ENCODE measurements at regions of chr9 and their contacts with region 1.

Region 1: DNA sequence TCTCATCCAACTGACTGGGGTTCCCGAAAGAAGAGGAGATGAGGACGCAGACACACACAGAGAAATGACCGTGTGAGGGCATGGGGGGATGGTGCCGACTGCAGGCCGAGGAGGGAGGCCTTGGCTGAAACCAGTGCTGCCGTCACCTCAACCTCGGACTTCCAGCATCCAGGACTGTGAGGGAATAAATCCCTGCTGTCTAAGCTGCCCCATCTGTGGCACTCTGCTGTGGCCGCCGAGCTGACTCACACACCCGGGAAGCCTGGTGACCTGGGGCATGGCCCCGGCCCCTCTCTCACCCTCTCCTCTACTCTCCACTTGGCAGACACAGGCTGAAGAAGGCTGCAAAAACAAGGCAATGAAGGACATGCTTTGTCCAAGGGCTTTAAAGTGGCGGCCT is 4.4 kb upstream of the COL5A1 start:
- DNase-seq: peak; percentile 74 to 94 (median 90)
- H3K4me3 ChIP-seq: no peak overlapping the region
- H3K27ac ChIP-seq: peak overlapping the region; percentile 7 to 93 (median 75)
- H3K4me1 ChIP-seq: peaks cover 10 to 23% of the 10 kb centered on the region in 2 donors
- H3K27me3 ChIP-seq: no peaks in the 10 kb centered on the region
- CTCF ChIP-seq: peak in 2 of 6 experiments; percentile 7 to 11
- POLR2A ChIP-seq: peak in 1 of 2 donors; percentile 37

Region 2: DNA sequence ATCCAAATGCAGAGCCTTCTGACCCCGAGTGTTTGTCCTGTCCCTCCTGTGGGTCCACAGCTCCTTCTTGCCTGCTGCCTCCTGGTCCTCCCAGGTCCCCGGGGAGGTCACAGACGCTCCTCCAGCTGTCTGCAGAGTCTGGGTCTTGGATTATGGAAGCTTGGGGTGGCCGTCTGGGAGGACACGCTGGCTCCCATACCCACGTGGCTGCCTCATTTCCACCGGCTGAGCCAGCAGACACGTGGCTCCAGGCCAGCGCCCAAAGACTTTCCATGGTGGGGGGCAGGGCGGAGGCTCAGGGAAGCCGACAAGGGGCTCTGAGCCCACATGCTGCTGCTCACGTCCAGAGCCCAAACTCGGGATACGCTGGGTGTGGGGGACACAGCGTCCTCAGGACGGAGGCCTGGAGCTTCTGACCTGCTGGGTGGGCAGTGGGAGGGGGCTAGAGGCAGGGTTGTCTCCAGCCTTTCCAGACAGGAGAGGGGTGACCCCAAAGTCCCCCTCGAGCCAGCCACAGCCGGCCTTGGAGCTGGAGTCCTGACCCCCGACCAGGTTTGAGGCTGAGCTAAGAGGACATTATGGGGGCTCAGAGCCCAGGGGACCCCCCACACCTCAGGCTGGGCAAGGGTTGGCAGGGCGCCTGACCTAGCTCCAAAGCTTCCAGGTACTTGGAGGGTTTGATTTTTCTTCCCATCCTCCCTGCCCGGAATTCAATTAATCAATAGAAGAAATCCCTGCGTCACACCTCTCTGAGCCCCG is 448.7 kb before region 1 on chr9:
- intact Hi-C with region 1: no loop called
- DNase-seq: peak in 3 of 7 donors; percentile 14 to 32 (median 29)
- H3K4me3 ChIP-seq: no peak overlapping the region
- H3K27ac ChIP-seq: peak overlapping the region in 2 of 5 donors; percentile 79 to 95
- H3K4me1 ChIP-seq: peaks cover 0 to 25% of the 10 kb centered on the region in 2 donors
- H3K27me3 ChIP-seq: no peaks in the 10 kb centered on the region
- CTCF ChIP-seq: no peak
- POLR2A ChIP-seq: no peak

Region 3: DNA sequence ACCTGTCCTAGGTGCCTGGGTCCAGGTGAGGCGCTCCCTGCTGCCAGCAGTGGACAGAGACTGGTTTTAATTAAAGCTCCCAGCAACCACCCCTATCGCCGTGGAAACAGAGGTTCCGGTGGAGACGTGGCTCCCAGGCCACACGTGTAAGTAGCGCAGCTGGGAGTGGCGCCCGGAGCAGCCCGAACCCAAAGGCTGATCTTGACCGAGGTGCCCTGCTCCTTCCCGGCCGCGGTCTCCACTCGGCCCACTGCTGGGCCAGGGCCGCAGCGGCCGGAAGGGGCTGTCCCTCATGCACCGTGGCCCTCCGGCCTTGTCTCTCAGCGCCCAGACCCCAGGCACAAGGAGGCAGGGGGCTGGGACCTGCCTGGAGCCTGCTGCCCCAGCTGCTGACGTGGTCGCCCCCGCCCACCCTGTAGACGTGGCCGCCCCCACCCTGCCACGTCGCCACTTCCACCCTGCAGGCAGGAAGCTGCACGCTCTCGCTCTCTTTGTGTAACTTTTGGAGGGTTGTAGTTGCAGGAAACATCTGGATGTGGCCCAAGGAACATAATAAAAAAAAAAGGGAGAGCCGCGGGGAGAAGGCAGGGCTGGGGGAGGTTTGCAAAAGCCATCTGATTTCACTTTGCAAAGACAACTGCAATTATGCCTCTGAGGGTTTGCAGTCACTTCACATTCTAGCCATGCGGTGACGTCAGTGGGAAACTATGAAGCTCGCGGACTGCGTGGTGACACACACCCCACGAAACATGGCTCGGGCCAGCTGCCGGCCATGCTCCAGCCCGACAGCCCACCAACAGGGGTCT is 181.1 kb before region 1 on chr9:
- intact Hi-C with region 1: loop called in 1 of 2 experiments (anchors 10 kb)
- DNase-seq: peak; percentile 60 to 89 (median 71)
- H3K4me3 ChIP-seq: peak overlapping the region in 1 of 4 donors; percentile 8
- H3K27ac ChIP-seq: peak overlapping the region; percentile 13 to 91 (median 84)
- H3K4me1 ChIP-seq: peaks cover 0 to 11% of the 10 kb centered on the region in 2 donors
- H3K27me3 ChIP-seq: no peaks in the 10 kb centered on the region
- CTCF ChIP-seq: no peak
- POLR2A ChIP-seq: peak in 1 of 2 donors; percentile 17

Region 4: GRCh38 chr9:134525841-134526595 is 111.2 kb before region 1 on chr9:
- intact Hi-C with region 1: loop called in 1 of 2 experiments (anchors 10 kb)
- DNase-seq: no peak
- H3K4me3 ChIP-seq: no peak overlapping the region
- H3K27ac ChIP-seq: no peak overlapping the region
- H3K4me1 ChIP-seq: no peaks in the 10 kb centered on the region
- H3K27me3 ChIP-seq: no peaks in the 10 kb centered on the region
- CTCF ChIP-seq: no peak
- POLR2A ChIP-seq: no peak

Region 5: GRCh38 chr9:134852906-134853654 is 215.8 kb after region 1 on chr9:
- intact Hi-C with region 1: no loop called
- DNase-seq: peak in 3 of 7 donors; percentile 4 to 10 (median 6)
- H3K4me3 ChIP-seq: no peak overlapping the region
- H3K27ac ChIP-seq: no peak overlapping the region
- H3K4me1 ChIP-seq: peaks cover 0 to 2% of the 10 kb centered on the region in 2 donors
- H3K27me3 ChIP-seq: no peaks in the 10 kb centered on the region
- CTCF ChIP-seq: no peak
- POLR2A ChIP-seq: no peak

Measured in adrenal gland (tissue), 19 donors.